ENCODE measurements at regions of chr15 and their contacts with region 1.

Region 1: GRCh38 chr15:80970018-80970658 is 19.5 kb downstream of the MESD start:
- DNase-seq: peak; percentile 59 to 79
- ATAC-seq: peak; percentile 83 to 93
- H3K4me3 ChIP-seq: no peak overlapping the region
- H3K27ac ChIP-seq: no peak overlapping the region
- H3K4me1 ChIP-seq: no peaks in the 10 kb centered on the region
- CTCF ChIP-seq: peak; percentile 98
- EP300 ChIP-seq: no peak
- POLR2A ChIP-seq: no peak
- RAD21 ChIP-seq: peak; percentile 98 to 99

Region 2: GRCh38 chr15:80573606-80574005 is 396.5 kb before region 1 on chr15:
- CTCF ChIA-PET with region 1: interaction called, 83 read pairs
- POLR2A ChIA-PET with region 1: no interaction called
- DNase-seq: no peak
- ATAC-seq: no peak
- H3K4me3 ChIP-seq: no peak overlapping the region
- H3K27ac ChIP-seq: no peak overlapping the region
- H3K4me1 ChIP-seq: no peaks in the 10 kb centered on the region
- CTCF ChIP-seq: no peak
- EP300 ChIP-seq: no peak
- POLR2A ChIP-seq: no peak
- RAD21 ChIP-seq: no peak

Region 3: DNA sequence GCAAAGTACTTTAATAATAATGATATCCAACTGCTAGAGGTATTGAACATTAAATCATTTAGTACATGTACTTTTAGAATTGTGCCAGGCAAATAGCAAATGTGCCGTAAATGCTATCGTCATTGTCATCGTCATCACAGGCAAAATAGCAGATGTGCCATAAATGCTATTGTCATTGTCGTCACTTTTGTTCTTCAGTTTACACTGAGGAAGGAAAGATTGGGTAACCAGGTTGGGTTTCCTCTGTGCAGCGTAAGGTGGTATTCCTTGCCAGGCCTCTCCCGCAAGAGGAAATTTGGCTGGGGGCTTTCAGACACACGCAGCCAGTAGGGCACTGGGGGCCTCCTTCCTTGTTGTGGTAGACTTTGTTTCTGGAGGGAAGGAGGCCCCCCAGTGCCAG is 248.7 kb before region 1 on chr15:
- CTCF ChIA-PET with region 1: no interaction called
- POLR2A ChIA-PET with region 1: no interaction called
- DNase-seq: no peak
- ATAC-seq: no peak
- H3K4me3 ChIP-seq: no peak overlapping the region
- H3K27ac ChIP-seq: no peak overlapping the region
- H3K4me1 ChIP-seq: no peaks in the 10 kb centered on the region
- CTCF ChIP-seq: no peak
- EP300 ChIP-seq: no peak
- POLR2A ChIP-seq: no peak
- RAD21 ChIP-seq: no peak

Region 4: DNA sequence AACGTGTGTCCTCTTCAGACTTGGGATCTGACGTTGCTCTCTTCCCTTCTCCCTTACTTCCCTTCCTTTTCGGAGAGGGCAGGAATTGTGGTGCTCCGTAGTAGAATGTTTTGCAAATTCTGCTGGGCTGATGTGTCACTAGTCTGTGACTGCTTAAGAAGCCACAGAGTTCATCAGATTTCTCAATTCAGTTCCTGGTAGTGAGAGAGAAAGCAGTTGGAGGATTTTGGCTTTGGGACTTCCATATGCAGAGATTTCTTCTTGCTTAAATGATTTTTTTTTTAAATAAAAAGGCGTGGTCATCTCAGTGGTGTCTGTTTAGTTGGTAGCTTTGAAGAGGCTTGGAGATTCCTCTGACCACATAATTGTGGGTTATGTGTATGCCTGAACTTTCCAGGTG is 180.8 kb before region 1 on chr15:
- CTCF ChIA-PET with region 1: interaction called, 50 read pairs
- POLR2A ChIA-PET with region 1: no interaction called
- DNase-seq: no peak
- ATAC-seq: no peak
- H3K4me3 ChIP-seq: no peak overlapping the region
- H3K27ac ChIP-seq: no peak overlapping the region
- H3K4me1 ChIP-seq: no peaks in the 10 kb centered on the region
- CTCF ChIP-seq: no peak
- EP300 ChIP-seq: no peak
- POLR2A ChIP-seq: no peak
- RAD21 ChIP-seq: no peak

Region 5: DNA sequence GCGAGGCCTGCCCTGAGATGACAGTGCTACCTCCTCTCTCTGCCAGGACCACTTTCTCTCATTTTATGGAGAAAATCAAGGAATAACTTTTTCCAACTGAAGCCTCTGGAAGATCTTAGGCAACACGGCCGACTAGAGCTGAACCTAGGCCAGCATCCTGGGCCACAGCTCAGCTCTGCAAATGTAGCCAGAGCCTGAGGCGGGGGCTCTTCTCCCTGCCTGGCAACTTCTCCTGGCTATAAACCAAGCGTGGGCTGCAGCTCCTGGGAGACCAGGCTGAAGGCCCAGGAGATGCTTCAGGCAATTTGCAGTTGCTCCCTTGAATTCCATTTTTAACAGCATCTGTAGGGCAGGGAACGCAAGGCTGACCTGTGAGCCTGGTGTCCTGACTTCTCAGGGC is 116.0 kb before region 1 on chr15:
- CTCF ChIA-PET with region 1: interaction called, 10 read pairs
- POLR2A ChIA-PET with region 1: no interaction called
- DNase-seq: no peak
- ATAC-seq: no peak
- H3K4me3 ChIP-seq: no peak overlapping the region
- H3K27ac ChIP-seq: no peak overlapping the region
- H3K4me1 ChIP-seq: peaks cover 30% of the 10 kb centered on the region
- CTCF ChIP-seq: no peak
- EP300 ChIP-seq: no peak
- POLR2A ChIP-seq: no peak
- RAD21 ChIP-seq: no peak

Region 6: DNA sequence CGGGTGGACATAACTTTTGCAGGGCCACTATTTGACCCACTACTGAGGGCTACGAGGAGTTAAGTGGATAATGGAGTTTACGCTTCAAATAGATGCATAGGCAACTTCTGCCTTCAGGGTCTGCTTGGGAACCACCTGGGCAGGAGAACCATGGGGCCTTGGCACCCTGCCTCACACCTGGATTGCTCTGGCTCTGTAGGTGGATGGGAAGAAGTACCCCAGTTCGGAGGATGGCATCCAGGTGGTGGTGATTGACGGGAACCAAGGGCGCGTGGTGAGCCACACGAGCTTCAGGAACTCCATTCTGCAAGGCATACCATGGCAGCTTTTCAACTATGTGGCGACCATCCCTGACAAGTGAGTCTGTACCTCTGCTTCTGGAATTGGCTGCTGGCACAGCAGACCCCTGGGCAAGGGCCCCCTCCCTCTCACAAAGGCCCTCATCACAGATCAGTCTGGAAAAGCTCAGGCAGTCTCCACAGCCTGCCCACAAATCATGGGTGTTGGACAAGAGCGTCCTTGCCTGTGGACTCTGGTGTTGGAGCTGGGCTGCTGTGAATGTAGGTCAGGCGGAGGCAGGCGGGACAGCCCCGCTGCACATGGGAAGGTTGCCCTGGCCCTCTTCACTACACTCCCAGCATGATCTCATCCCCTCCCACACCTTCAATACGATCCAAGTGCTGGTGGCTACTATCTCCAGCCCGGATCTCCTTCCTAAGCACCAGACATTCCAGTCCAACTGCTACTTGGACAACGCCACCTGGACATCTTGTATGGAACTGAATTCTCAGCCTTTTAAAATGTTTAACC is 27.2 kb before region 1 on chr15:
- CTCF ChIA-PET with region 1: interaction called, 28 read pairs
- POLR2A ChIA-PET with region 1: no interaction called
- DNase-seq: no peak
- ATAC-seq: no peak; a peak in 1 of 6 replicates
- H3K4me3 ChIP-seq: no peak overlapping the region
- H3K27ac ChIP-seq: no peak overlapping the region
- H3K4me1 ChIP-seq: no peaks in the 10 kb centered on the region
- CTCF ChIP-seq: no peak
- EP300 ChIP-seq: no peak
- POLR2A ChIP-seq: no peak
- RAD21 ChIP-seq: no peak

Region 7: GRCh38 chr15:81176291-81176893 is 206.3 kb after region 1 on chr15:
- CTCF ChIA-PET with region 1: no interaction called
- POLR2A ChIA-PET with region 1: no interaction called
- DNase-seq: no peak
- ATAC-seq: peak in 1 of 2 experiments; percentile 45; a peak in 4 of 6 replicates
- H3K4me3 ChIP-seq: no peak overlapping the region
- H3K27ac ChIP-seq: no peak overlapping the region
- H3K4me1 ChIP-seq: no peaks in the 10 kb centered on the region
- CTCF ChIP-seq: no peak
- EP300 ChIP-seq: no peak
- POLR2A ChIP-seq: no peak
- RAD21 ChIP-seq: no peak

Measured in A549 (cell line).